BJ (cell line): ENCODE measurements at regions of chr12 and their contacts with region 1.

Region 1: DNA sequence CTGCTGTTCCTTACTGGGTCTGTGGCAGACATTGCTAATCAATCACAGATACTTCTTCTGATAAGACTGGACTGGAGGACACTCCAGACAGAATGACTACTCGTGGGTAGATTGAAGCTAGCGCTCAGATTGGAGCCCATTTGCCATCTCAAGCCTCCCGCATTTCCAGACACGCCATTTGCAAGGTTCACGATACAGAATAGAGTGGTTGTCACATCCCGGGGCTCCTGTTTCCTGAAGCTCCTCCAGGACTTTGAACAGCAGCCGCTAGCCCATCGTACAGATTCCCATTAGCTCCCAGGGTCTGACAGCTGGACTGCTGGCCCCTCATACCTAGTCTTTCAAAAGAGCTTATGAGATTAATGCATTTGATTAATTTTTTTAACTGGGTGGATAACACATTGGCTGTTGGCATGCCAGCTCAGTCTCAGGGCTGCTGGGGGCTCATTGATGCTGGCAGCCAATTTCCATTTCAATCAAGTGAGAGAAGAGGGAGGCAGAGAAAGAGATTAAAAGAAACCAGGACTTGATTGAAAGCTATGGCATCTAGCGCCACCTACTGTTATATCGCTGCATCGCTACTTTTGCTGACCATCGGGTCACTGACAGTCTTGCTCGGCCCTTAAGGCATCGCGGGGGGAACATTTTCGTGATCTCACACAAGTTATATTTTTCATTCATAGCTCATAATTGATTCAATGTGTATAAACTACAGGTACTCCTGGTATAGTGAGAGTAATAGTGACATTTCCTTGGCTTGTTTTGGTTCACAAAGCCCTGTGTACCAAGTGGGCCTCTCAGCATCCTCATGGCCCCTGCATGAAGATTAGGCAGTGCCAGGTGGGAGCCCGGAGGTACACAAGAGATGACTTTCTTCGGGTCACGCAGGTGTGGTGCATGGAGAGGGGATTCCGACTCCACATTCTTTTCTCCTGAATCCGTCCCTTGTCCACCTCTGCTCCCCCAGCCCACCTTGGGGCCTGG is 78.6 kb downstream of the CCDC60 start:
- DNase-seq: peak; percentile 1
- H3K4me3 ChIP-seq: no peak overlapping the region
- H3K27me3 ChIP-seq: no peaks in the 10 kb centered on the region
- CTCF ChIP-seq: peak; percentile 74

Region 2: DNA sequence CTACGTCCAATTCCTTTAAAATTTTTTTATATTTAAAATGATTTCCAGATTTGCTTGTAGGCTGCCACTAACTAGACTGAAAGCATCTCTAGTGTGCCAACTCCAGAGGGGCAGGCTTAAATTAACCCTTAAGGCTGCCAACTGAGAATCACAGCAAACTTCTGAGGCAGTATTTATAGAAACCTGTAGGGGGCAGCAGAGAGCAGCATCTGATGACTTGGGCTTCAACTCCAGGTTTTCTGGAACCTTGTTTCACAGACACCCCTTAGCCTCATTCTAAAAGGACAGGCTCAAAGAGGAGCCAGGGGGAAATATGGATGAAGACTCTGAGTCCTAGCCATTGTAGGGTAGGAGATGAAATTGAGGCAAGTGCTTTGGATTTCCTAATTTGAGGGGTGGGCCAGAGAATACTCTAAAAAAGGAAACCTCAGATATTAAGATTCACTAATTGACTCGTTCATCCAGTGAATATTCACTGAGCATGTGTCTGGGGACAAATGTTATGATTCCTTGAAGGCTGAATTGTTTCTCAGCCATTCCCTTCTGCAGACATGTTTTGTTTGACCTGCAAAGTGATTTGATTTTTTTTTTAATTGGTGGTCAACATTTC is 297.7 kb before region 1 on chr12:
- CTCF ChIA-PET with region 1: interaction called, 45 read pairs
- POLR2A ChIA-PET with region 1: no interaction called
- DNase-seq: no peak
- H3K4me3 ChIP-seq: no peak overlapping the region
- H3K27me3 ChIP-seq: no peaks in the 10 kb centered on the region
- CTCF ChIP-seq: peak; percentile 83

Region 3: GRCh38 chr12:119423285-119423684 is 10.2 kb after region 1 on chr12:
- CTCF ChIA-PET with region 1: interaction called, 10 read pairs
- POLR2A ChIA-PET with region 1: no interaction called
- DNase-seq: no peak
- H3K4me3 ChIP-seq: no peak overlapping the region
- H3K27me3 ChIP-seq: no peaks in the 10 kb centered on the region
- CTCF ChIP-seq: no peak